ENCODE measurements at regions of chr2 and their contacts with region 1.

Region 1: GRCh38 chr2:176454893-176455811 is 185.9 kb downstream of the MTX2 start:
- DNase-seq: peak; percentile 57 to 88 (median 75)
- ATAC-seq: peak; percentile 76
- H3K4me3 ChIP-seq: no peak overlapping the region
- H3K4me3 Mint-ChIP-seq: no peak overlapping the region
- H3K27ac ChIP-seq: no peak overlapping the region
- H3K27ac Mint-ChIP-seq: no peak overlapping the region
- H3K4me1 ChIP-seq: no peaks in the 10 kb centered on the region
- H3K4me1 Mint-ChIP-seq: peaks cover 2% of the 10 kb centered on the region
- H3K27me3 ChIP-seq: peaks cover 0 to 3% of the 10 kb centered on the region in 2 experiments
- H3K27me3 Mint-ChIP-seq: peaks cover 42% of the 10 kb centered on the region
- CTCF ChIP-seq: peak; percentile 97

Region 2: GRCh38 chr2:175690113-175690837 is 764.9 kb before region 1 on chr2:
- CTCF ChIA-PET with region 1: no interaction called
- POLR2A ChIA-PET with region 1: no interaction called
- intact Hi-C with region 1: no loop called
- DNase-seq: peak in 3 of 9 experiments; percentile 14 to 63 (median 59)
- ATAC-seq: peak; percentile 38
- H3K4me3 ChIP-seq: no peak overlapping the region
- H3K4me3 Mint-ChIP-seq: no peak overlapping the region
- H3K27ac ChIP-seq: no peak overlapping the region
- H3K27ac Mint-ChIP-seq: no peak overlapping the region
- H3K4me1 ChIP-seq: no peaks in the 10 kb centered on the region
- H3K4me1 Mint-ChIP-seq: no peaks in the 10 kb centered on the region
- H3K27me3 ChIP-seq: peaks cover 0 to under 1% of the 10 kb centered on the region in 2 experiments
- H3K27me3 Mint-ChIP-seq: peaks cover 27% of the 10 kb centered on the region
- CTCF ChIP-seq: peak; percentile 56

Region 3: DNA sequence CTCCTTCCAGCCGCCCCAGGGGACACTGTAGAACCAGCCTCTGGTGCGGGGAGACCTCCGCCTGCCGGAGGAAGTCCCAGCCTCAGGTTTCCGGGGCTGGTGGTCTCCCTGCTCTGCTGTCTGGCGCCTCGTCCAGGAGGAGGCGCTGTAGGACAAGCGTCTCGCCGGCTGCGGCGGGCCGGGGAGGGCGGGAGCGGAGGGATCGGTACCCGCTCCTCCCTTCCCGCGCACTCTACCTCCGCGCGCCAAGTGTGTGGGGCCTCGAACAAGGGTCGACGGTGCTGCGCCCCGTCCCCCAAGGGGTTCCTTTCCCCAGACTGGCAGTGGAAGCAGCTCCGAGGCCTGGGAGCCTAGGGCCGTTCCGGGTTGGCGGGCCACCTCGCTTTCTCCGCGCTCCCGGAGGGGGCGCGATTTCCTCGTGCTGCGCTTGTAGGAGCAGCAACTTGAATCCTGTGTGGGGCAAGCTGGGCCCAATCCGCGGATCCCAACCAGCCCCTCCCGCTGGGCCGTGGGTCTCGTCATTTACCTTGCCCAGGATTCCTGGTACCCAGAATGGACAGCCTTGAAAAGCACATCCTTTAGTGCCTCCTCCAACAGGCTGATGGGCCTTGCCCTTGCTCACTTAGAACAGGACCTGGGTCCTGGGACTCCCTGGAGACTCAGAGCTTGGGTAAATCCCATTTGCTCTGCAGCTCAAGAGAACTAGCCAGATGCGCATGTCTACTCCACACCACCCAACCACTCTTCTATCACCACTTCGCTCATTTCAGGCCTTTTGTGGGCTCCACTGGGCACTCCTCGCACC is 314.4 kb before region 1 on chr2:
- CTCF ChIA-PET with region 1: interaction called, 60 read pairs
- POLR2A ChIA-PET with region 1: no interaction called
- intact Hi-C with region 1: loop called (anchors 1 kb)
- DNase-seq: peak; percentile 37 to 84 (median 75)
- ATAC-seq: peak; percentile 93
- H3K4me3 ChIP-seq: peak overlapping the region; percentile 28 to 38
- H3K4me3 Mint-ChIP-seq: peak overlapping the region; percentile 8
- H3K27ac ChIP-seq: no peak overlapping the region
- H3K27ac Mint-ChIP-seq: no peak overlapping the region
- H3K4me1 ChIP-seq: peaks cover 22% of the 10 kb centered on the region
- H3K4me1 Mint-ChIP-seq: peaks cover 32% of the 10 kb centered on the region
- H3K27me3 ChIP-seq: peaks cover 46 to 47% of the 10 kb centered on the region in 2 experiments
- H3K27me3 Mint-ChIP-seq: peaks cover 80% of the 10 kb centered on the region
- CTCF ChIP-seq: peak; percentile 76

Region 4: DNA sequence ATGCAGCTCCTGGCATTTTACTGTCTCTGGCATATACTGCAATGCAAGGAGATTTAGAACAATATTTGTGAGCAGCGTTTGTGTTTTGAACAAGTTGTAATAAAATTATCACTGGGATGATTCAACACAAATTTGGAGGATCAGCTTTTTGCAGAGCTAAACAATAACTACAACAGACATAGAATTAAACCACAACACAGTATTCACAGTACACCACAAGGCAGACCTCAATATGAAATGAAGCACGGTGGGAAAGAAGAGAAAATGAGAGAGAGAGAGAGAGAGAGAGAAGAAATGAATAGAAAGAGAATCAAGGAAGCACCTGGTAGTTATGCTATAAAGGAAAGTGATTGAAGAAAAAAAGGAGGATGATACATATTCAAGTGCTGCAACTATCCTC is 227.3 kb before region 1 on chr2:
- CTCF ChIA-PET with region 1: no interaction called
- POLR2A ChIA-PET with region 1: no interaction called
- intact Hi-C with region 1: no loop called
- DNase-seq: no peak
- ATAC-seq: no peak
- H3K4me3 ChIP-seq: no peak overlapping the region
- H3K4me3 Mint-ChIP-seq: no peak overlapping the region
- H3K27ac ChIP-seq: no peak overlapping the region
- H3K27ac Mint-ChIP-seq: no peak overlapping the region
- H3K4me1 ChIP-seq: no peaks in the 10 kb centered on the region
- H3K4me1 Mint-ChIP-seq: no peaks in the 10 kb centered on the region
- H3K27me3 ChIP-seq: peaks cover 0 to 7% of the 10 kb centered on the region in 2 experiments
- H3K27me3 Mint-ChIP-seq: peaks cover 57% of the 10 kb centered on the region
- CTCF ChIP-seq: no peak

Region 5: GRCh38 chr2:176398243-176399073 is 56.7 kb before region 1 on chr2:
- CTCF ChIA-PET with region 1: no interaction called
- POLR2A ChIA-PET with region 1: no interaction called
- intact Hi-C with region 1: no loop called
- DNase-seq: no peak
- ATAC-seq: no peak
- H3K4me3 ChIP-seq: no peak overlapping the region
- H3K4me3 Mint-ChIP-seq: no peak overlapping the region
- H3K27ac ChIP-seq: no peak overlapping the region
- H3K27ac Mint-ChIP-seq: no peak overlapping the region
- H3K4me1 ChIP-seq: no peaks in the 10 kb centered on the region
- H3K4me1 Mint-ChIP-seq: no peaks in the 10 kb centered on the region
- H3K27me3 ChIP-seq: no peaks in the 10 kb centered on the region
- H3K27me3 Mint-ChIP-seq: peaks cover 14% of the 10 kb centered on the region
- CTCF ChIP-seq: no peak

Region 6: DNA sequence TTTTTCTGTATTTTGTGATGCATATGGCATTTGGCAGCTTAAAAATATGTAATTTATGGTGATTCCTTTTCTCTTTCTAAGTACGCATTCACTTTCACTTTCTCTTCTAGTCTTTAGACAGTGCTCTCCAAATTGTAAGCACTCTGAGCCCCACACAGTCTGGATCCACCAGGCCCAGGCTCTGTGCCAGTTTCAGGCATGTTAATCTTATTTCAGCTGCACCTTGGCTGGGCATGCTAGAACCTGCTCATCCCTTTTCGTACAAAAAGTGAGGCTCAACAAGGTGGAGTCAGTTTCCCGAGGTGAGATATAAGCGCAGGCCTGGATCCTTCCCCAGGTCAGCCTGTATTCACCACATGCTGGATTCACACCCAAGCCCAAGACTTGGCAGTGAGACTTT is 18.0 kb after region 1 on chr2:
- CTCF ChIA-PET with region 1: interaction called, 15 read pairs
- POLR2A ChIA-PET with region 1: no interaction called
- intact Hi-C with region 1: no loop called
- DNase-seq: peak in 3 of 9 experiments; percentile 15 to 31 (median 17)
- ATAC-seq: peak; percentile 44
- H3K4me3 ChIP-seq: peak overlapping the region; percentile 16 to 44
- H3K4me3 Mint-ChIP-seq: peak overlapping the region; percentile 75
- H3K27ac ChIP-seq: peak overlapping the region in 1 of 2 experiments; percentile 18
- H3K27ac Mint-ChIP-seq: peak overlapping the region; percentile 43
- H3K4me1 ChIP-seq: peaks cover 3% of the 10 kb centered on the region
- H3K4me1 Mint-ChIP-seq: peaks cover 15% of the 10 kb centered on the region
- H3K27me3 ChIP-seq: no peaks in the 10 kb centered on the region
- H3K27me3 Mint-ChIP-seq: peaks cover 4% of the 10 kb centered on the region
- CTCF ChIP-seq: no peak

Region 7: GRCh38 chr2:176518823-176519222 is 63.7 kb after region 1 on chr2:
- CTCF ChIA-PET with region 1: no interaction called
- POLR2A ChIA-PET with region 1: no interaction called
- intact Hi-C with region 1: no loop called
- DNase-seq: no peak
- ATAC-seq: no peak
- H3K4me3 ChIP-seq: no peak overlapping the region
- H3K4me3 Mint-ChIP-seq: no peak overlapping the region
- H3K27ac ChIP-seq: no peak overlapping the region
- H3K27ac Mint-ChIP-seq: no peak overlapping the region
- H3K4me1 ChIP-seq: peaks cover 18% of the 10 kb centered on the region
- H3K4me1 Mint-ChIP-seq: peaks cover 13% of the 10 kb centered on the region
- H3K27me3 ChIP-seq: no peaks in the 10 kb centered on the region
- H3K27me3 Mint-ChIP-seq: peaks cover 2% of the 10 kb centered on the region
- CTCF ChIP-seq: no peak

Region 8: GRCh38 chr2:176554101-176555048 is 99.2 kb after region 1 on chr2:
- CTCF ChIA-PET with region 1: interaction called, 13 read pairs
- POLR2A ChIA-PET with region 1: no interaction called
- intact Hi-C with region 1: no loop called
- DNase-seq: peak in 6 of 9 experiments; percentile 16 to 72 (median 40)
- ATAC-seq: peak; percentile 59
- H3K4me3 ChIP-seq: peak overlapping the region; percentile 47 to 51
- H3K4me3 Mint-ChIP-seq: peak overlapping the region; percentile 84
- H3K27ac ChIP-seq: no peak overlapping the region
- H3K27ac Mint-ChIP-seq: no peak overlapping the region
- H3K4me1 ChIP-seq: no peaks in the 10 kb centered on the region
- H3K4me1 Mint-ChIP-seq: peaks cover 11% of the 10 kb centered on the region
- H3K27me3 ChIP-seq: peaks cover 3% of the 10 kb centered on the region in 2 experiments
- H3K27me3 Mint-ChIP-seq: peaks cover 42% of the 10 kb centered on the region
- CTCF ChIP-seq: peak; percentile 77

Region 9: DNA sequence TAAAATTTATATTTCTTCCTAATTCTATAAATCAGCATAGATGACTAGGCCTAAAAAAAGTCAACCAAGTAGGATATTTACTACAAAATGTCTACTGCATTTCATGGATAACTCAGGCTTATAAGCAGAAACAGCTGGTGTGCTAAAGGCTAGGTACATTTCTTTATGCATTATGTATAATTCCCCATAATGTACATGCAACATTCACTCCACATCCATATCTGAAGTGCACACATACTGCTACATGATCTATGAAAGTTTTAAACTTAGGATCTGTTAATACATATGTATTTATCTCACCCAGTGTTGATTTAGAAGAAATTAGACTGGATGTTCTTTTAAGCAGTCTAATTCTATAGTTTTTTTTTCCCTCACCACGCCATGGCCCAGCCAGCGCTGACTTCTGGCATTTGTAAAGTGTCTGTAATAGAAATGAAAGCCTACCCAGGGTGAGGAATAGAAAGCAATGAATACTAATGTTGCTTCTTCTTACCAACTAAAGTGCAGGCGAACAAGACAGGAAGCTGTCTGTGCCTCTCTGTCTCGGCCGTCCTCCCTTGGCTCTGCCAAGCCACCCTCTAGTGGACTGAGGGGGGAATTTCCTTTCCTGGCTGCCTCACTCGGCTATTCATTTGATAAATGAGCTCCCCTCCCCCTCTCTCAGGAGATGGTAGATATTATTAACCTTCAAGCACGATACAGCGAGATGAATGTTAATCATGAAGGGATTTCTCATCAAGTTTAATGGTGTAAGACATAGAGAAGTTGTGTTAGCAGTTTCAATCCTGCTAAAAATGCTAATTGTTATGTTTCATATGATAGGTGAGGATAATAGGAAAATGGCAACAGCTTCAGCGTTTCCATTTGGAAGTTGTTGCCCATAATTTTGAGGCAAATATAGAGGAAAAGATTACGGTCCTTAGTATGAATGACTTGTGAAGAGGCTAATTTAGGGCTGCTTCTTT is 198.6 kb after region 1 on chr2:
- CTCF ChIA-PET with region 1: interaction called, 3 read pairs
- POLR2A ChIA-PET with region 1: no interaction called
- intact Hi-C with region 1: loop called in 1 of 2 experiments (anchors 2 kb)
- DNase-seq: peak in 5 of 9 experiments; percentile 22 to 55 (median 32)
- ATAC-seq: no peak
- H3K4me3 ChIP-seq: no peak overlapping the region
- H3K4me3 Mint-ChIP-seq: no peak overlapping the region
- H3K27ac ChIP-seq: no peak overlapping the region
- H3K27ac Mint-ChIP-seq: no peak overlapping the region
- H3K4me1 ChIP-seq: peaks cover 12% of the 10 kb centered on the region
- H3K4me1 Mint-ChIP-seq: peaks cover 14% of the 10 kb centered on the region
- H3K27me3 ChIP-seq: peaks cover 0 to 4% of the 10 kb centered on the region in 2 experiments
- H3K27me3 Mint-ChIP-seq: peaks cover 36% of the 10 kb centered on the region
- CTCF ChIP-seq: peak; percentile 42

Measured in CD8-positive, alpha-beta T cell (primary cell).